Right ventricle myocardium inferior (tissue), 1 donor: ENCODE measurements at regions of chrX and their contacts with region 1.

Region 1: GRCh38 chrX:12814420-12814819 is 23.2 kb downstream of the PRPS2 start:
- DNase-seq: no peak
- ATAC-seq: no peak

Region 2: GRCh38 chrX:12065251-12065650 is 749.2 kb before region 1 on chrX:
- intact Hi-C with region 1: no loop called
- DNase-seq: no peak
- ATAC-seq: no peak

Region 3: GRCh38 chrX:12278151-12278550 is 536.3 kb before region 1 on chrX:
- intact Hi-C with region 1: no loop called
- DNase-seq: no peak
- ATAC-seq: no peak

Region 4: DNA sequence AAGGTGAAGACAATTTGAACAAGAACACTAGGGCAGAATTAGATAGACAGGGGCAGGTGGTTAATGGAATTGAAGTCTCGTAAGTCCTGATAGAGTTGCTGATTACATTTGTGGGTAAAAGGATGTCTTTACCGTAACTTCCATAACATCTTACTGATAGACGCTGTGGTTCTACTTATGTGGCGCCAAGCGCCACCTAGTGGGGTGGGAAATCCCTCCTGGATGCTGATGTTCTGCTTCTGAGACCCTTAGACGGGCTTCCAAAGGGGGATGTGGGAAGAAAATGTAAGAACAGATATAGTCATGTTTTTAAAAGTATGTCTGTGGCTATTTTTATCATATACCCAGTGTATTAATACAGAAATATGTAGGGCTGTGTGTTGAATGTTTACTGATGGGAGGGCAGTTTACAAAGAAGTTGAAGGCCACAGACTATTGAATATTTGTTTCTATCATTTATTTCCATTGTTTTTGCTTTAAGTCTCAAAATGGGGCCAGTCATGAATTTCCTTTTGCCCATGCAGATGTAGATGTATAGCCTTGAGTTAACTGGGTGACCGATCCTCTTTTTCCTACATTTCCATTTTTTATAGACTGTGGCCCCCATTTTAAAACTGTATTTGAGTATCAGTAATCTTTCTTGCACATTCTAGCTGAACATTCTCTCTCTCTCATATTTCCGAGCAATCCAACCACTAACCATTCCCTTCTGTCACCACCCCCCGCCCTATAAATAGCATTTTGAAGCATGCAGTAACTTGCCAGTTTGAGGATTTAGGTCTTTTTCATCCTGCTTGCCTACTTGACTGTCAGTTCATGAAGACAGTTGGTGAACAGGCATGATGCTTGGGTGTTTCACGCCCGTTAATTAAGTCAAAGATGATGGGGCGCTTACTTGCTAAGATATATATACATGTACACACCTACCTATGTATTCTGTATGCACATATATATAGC is 79.9 kb after region 1 on chrX:
- intact Hi-C with region 1: loop called (anchors 10 kb)
- DNase-seq: no peak
- ATAC-seq: no peak

Region 5: DNA sequence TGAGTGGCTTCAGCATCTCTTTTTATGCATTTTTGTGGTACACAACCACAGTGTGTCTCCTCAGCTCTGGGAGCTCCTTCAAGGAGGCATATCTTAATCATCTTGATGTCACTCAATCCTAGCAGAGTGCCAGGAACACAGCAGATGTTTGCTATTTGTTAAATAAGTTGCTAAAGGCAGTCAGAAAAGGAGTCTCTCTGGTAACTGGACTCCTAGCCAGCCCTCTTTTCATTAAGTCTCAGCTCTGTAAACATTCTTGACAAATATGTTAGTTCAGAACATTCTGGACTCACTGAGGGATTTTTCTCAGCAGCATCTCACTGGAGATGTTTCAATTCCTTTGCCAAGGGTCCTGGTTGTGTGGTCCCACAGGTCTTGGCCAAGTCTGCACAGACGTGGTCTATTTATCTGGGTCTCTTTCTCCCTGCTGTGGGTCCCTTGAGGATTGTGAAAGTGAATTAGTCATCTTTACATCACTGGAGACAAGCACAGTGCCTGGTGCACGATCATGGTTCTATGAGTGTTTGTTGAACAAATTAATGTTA is 250.3 kb after region 1 on chrX:
- intact Hi-C with region 1: no loop called
- DNase-seq: no peak
- ATAC-seq: peak; percentile 95